ENCODE measurements at regions of chr7 and their contacts with region 1.

Region 1: GRCh38 chr7:107479321-107479720 is 9.5 kb downstream of the GPR22 start:
- DNase-seq: no peak
- ATAC-seq: no peak
- H3K4me3 ChIP-seq: no peak overlapping the region
- H3K4me3 Mint-ChIP-seq: no peak overlapping the region
- H3K27ac ChIP-seq: no peak overlapping the region
- H3K27ac Mint-ChIP-seq: no peak overlapping the region
- H3K4me1 ChIP-seq: no peaks in the 10 kb centered on the region
- H3K4me1 Mint-ChIP-seq: no peaks in the 10 kb centered on the region
- H3K27me3 ChIP-seq: no peaks in the 10 kb centered on the region
- H3K27me3 Mint-ChIP-seq: no peaks in the 10 kb centered on the region
- CTCF ChIP-seq: no peak

Region 2: GRCh38 chr7:106126170-106126938 is 1353.0 kb before region 1 on chr7:
- CTCF ChIA-PET with region 1: no interaction called
- POLR2A ChIA-PET with region 1: no interaction called
- intact Hi-C with region 1: no loop called
- DNase-seq: peak in 8 of 9 experiments; percentile 6 to 63 (median 54)
- ATAC-seq: peak; percentile 89
- H3K4me3 ChIP-seq: no peak overlapping the region
- H3K4me3 Mint-ChIP-seq: peak overlapping the region; percentile 54
- H3K27ac ChIP-seq: no peak overlapping the region
- H3K27ac Mint-ChIP-seq: peak overlapping the region; percentile 8
- H3K4me1 ChIP-seq: peaks cover 10% of the 10 kb centered on the region
- H3K4me1 Mint-ChIP-seq: peaks cover 16% of the 10 kb centered on the region
- H3K27me3 ChIP-seq: no peaks in the 10 kb centered on the region
- H3K27me3 Mint-ChIP-seq: peaks cover 2% of the 10 kb centered on the region
- CTCF ChIP-seq: no peak

Region 3: DNA sequence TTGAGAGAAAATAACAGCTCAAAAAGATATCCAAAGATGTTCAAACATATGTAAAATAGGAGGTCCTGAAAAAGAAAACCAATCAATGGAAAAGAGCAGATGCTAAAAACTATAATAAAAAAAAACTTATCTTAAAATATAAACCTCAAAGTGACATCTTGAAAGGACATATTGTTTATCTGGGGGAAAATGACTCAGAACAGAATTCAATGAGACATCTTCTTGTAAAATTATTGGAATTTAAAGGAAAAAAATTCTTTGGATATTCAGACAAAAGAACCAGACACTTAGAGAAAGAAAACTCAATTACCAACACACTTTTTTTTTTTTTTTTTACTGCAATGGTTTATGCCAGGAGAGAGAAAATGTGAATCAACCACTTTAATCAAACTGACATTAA is 1253.5 kb before region 1 on chr7:
- CTCF ChIA-PET with region 1: no interaction called
- POLR2A ChIA-PET with region 1: no interaction called
- intact Hi-C with region 1: loop called in 1 of 2 experiments (anchors 5 kb)
- DNase-seq: no peak
- ATAC-seq: no peak
- H3K4me3 ChIP-seq: no peak overlapping the region
- H3K4me3 Mint-ChIP-seq: no peak overlapping the region
- H3K27ac ChIP-seq: no peak overlapping the region
- H3K27ac Mint-ChIP-seq: no peak overlapping the region
- H3K4me1 ChIP-seq: no peaks in the 10 kb centered on the region
- H3K4me1 Mint-ChIP-seq: no peaks in the 10 kb centered on the region
- H3K27me3 ChIP-seq: peaks cover 0 to 4% of the 10 kb centered on the region in 2 experiments
- H3K27me3 Mint-ChIP-seq: peaks cover 10% of the 10 kb centered on the region
- CTCF ChIP-seq: no peak